HEK293 (cell line): ENCODE measurements at regions of chr6 and their contacts with region 1.

Region 1: DNA sequence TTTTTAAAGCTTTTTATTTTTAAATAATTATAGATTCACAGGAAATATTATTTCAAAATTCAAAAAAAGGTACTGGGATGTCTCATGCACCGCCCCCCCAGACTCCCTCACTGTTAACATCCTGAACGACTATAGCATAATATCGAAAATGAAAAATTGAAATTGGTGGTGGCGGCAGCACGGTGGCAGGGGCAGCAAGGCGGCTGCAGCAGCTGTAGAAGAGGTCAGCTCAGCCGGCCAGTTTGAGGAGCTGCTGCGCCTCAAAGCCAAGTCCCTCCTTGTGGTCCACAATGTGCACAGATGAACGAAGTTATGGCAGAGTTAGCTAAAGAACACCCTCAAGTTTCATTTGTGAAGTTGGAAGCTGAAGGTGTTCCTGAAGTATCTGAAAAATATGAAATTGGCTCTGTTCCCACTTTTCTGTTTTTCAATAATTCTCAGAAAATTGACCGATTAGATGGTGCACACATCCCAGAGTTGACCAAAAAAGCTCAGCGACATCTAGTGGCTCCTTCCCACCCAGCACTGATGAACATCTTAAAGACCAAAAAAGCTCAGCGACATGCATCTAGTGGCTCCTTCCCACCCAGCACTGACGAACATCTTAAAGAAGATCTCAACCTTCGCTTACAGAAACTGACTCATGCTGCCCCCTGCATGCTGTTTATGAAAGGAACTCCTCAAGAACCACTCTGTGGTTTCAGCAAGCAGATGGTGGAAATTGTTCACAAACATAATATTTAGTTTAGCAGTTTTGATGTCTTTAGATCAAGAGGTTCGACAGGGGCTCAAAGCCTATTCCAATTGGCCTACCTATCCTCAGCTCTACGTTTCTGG is 100.8 kb downstream of the FAM217A start:
- H3K4me3 ChIP-seq: no peak overlapping the region
- H3K27ac ChIP-seq: no peak overlapping the region
- H3K4me1 ChIP-seq: no peaks in the 10 kb centered on the region
- CTCF ChIP-seq: peak; percentile 89

Region 2: DNA sequence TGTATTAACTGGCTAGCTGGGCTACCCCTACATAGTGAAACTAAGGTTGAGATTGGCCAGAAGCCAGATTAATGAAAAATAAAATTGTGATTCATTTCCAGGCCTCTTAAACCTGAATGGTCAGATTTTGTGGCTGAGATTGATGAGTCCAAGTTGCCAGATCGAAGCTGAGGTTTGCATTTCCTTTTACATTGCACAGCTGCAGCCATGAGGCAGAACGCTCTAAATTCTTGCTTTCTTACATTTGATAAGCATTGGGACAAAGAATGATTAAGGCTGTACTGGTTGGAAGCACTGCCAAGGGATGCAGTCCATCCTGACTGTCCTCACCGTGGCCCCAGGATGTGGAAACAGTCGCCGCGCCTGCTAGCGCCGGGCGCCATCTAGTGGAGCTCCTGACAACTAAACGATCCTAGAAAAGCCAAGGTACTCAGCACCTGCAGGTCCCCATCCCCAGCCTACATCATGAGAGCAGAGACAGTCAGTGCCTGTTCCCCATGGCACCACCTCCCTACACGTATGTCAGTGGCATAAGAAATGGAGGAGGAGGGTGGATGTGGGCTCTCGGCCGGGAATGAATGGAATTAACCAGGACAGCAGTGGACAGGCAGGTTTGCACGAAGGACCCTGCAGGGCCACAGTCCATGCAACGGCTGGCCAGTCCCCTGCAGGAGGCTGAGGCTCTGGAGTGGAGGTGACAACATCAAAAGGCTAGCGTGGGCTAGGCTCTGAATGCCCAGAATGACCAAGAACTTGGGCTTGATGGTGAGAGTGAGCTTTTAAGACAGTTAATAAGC is 245.6 kb before region 1 on chr6:
- CTCF ChIA-PET with region 1: interaction called, 25 read pairs
- POLR2A ChIA-PET with region 1: no interaction called
- H3K4me3 ChIP-seq: no peak overlapping the region
- H3K27ac ChIP-seq: no peak overlapping the region
- H3K4me1 ChIP-seq: no peaks in the 10 kb centered on the region
- CTCF ChIP-seq: peak; percentile 88

Region 3: GRCh38 chr6:3829285-3829684 is 148.8 kb before region 1 on chr6:
- CTCF ChIA-PET with region 1: interaction called, 24 read pairs
- POLR2A ChIA-PET with region 1: no interaction called
- H3K4me3 ChIP-seq: no peak overlapping the region
- H3K27ac ChIP-seq: no peak overlapping the region
- H3K4me1 ChIP-seq: no peaks in the 10 kb centered on the region
- CTCF ChIP-seq: no peak

Region 4: GRCh38 chr6:3887150-3887700 is 90.9 kb before region 1 on chr6:
- CTCF ChIA-PET with region 1: interaction called, 19 read pairs
- POLR2A ChIA-PET with region 1: no interaction called
- H3K4me3 ChIP-seq: no peak overlapping the region
- H3K27ac ChIP-seq: no peak overlapping the region
- H3K4me1 ChIP-seq: no peaks in the 10 kb centered on the region
- CTCF ChIP-seq: no peak

Region 5: DNA sequence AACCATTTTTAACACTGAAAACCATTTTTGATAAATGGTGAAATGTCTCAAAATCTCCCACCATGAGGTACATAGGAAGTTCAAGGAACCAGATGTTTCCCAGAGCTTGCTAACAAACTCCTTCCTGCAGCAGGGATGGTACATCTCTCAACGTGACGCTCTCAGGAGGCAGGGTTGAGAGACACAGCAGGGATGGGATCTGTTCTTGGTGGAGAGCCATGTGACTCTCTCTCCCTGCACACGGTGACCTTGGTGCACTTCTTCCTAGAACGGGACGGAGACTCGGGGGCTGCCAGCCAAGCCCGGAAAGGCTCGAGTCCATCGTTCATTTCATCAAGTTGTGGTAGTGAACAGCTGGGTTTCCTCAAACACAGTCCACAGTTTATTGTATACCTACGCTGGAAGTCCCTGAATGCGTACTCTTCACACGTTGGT is 34.7 kb before region 1 on chr6:
- CTCF ChIA-PET with region 1: interaction called, 25 read pairs
- POLR2A ChIA-PET with region 1: no interaction called
- H3K4me3 ChIP-seq: no peak overlapping the region
- H3K27ac ChIP-seq: no peak overlapping the region
- H3K4me1 ChIP-seq: no peaks in the 10 kb centered on the region
- CTCF ChIP-seq: no peak

Region 6: GRCh38 chr6:3990692-3991501 is 12.8 kb after region 1 on chr6:
- CTCF ChIA-PET with region 1: interaction called, 57 read pairs
- POLR2A ChIA-PET with region 1: no interaction called
- H3K4me3 ChIP-seq: no peak overlapping the region
- H3K27ac ChIP-seq: no peak overlapping the region; the same call in 1 of the 2 replicates
- H3K4me1 ChIP-seq: no peaks in the 10 kb centered on the region
- CTCF ChIP-seq: peak; percentile 94